ENCODE measurements at regions of chr22 and their contacts with region 1.

Region 1: DNA sequence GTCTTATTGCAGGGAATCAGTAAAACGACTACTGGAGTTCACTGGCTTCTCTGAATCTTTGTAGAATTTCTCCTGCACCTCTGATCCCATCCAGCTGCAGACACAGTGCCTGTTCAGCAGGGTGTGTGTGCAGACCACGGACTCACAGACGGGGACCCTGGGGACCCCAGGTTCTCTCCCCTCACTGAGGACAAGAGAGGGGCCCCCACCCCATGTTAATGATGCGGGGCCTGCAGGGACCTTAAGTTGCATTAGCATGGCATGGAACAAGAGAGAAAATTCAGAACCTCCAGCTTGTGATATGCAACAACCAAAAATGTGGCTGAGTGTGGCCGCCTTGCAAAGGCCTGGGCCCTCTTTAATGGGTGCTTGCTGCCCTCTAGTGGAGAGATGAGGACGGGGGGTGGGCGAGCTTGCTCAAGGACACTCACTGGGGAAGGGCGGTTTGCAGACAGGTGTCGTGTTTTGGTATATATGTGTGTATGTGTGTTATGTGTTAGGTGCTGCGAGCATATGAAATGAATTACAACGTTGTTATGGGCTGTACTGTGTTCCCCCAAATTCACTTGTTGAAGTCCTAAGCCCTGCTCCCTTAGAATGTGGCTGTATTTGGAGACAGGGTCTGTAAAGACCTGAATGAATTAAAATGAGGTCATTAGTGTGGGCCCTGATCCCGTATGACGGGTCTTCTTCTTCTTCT is 84.4 kb upstream of the SEPTIN5 start:
- DNase-seq: peak; percentile 87
- H3K4me3 ChIP-seq: no peak overlapping the region
- H3K27ac ChIP-seq: no peak overlapping the region
- H3K4me1 ChIP-seq: no peaks in the 10 kb centered on the region
- H3K27me3 ChIP-seq: no peaks in the 10 kb centered on the region
- CTCF ChIP-seq: peak; percentile 63 to 81 (median 64)
- POLR2A ChIP-seq: no peak

Region 2: GRCh38 chr22:19130959-19131684 is 498.7 kb before region 1 on chr22 and contains the start of gene TSSK2:
- intact Hi-C with region 1: loop called (anchors 10 kb)
- DNase-seq: no peak
- H3K4me3 ChIP-seq: no peak within 1 kb of the TSS
- H3K27ac ChIP-seq: no peak within 1 kb of the TSS
- H3K4me1 ChIP-seq: peaks cover 5% of the 10 kb centered on the region
- H3K27me3 ChIP-seq: no peaks in the 10 kb centered on the region
- CTCF ChIP-seq: no peak
- POLR2A ChIP-seq: no peak
- total RNA-seq, gene TSSK2: 66.0 to 188 TPM

Region 3: DNA sequence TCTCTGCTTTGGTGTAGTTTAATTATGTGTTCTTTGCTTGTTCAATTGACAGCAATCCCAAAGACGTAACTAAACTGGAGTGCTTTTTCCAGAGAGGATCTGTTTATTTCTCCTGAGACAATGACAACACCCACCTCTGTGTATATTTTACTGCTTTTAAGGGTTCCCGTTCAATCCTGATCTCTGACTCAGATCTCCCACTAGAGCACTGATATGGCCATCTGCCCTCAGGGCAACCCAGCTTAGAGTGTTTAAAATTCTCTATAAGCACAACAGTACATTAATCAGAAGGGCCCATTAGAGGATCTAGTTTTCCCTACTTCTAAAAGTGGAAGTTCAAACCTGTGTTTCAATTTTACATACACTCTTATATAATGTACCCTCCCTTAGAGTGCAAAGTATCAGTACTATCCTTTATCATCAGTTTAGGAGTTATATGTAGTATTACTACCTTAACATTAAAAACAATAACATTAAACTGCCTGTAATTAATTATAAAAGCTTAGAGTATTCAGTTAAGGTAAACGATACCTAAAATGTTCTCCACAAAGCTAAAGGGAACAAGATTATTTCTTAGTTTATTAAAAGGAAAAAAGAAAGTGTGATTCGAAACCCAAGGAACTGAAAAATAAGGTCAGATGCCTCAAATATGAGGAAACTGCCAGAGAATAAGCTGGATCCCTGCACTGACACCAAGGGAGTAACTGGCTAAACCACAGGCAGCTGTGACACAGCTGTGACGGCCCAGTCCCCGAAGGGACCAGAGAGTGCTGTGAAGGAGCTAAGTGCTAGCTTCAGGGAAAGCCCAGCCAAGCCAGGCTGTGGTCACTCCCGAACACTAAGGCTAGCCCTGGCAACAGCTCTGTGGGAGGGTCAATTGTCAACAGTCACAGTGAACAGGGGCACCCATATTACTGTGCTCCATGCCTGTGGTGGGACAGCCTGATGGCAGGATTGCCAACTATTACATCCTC is 166.1 kb before region 1 on chr22:
- intact Hi-C with region 1: no loop called
- DNase-seq: no peak
- H3K4me3 ChIP-seq: no peak overlapping the region
- H3K27ac ChIP-seq: no peak overlapping the region
- H3K4me1 ChIP-seq: no peaks in the 10 kb centered on the region
- H3K27me3 ChIP-seq: no peaks in the 10 kb centered on the region
- CTCF ChIP-seq: no peak
- POLR2A ChIP-seq: no peak

Measured in testis (tissue), 5 donors.